Activated CD8-positive, alpha-beta T cell treated with anti-CD3 and anti-CD28 coated beads, Interleukin-2, amount 10 ng/mL, durations not matched to agents 7 days and 5 days (primary cell): ENCODE measurements at regions of chr16 and their contacts with region 1.

Region 1: DNA sequence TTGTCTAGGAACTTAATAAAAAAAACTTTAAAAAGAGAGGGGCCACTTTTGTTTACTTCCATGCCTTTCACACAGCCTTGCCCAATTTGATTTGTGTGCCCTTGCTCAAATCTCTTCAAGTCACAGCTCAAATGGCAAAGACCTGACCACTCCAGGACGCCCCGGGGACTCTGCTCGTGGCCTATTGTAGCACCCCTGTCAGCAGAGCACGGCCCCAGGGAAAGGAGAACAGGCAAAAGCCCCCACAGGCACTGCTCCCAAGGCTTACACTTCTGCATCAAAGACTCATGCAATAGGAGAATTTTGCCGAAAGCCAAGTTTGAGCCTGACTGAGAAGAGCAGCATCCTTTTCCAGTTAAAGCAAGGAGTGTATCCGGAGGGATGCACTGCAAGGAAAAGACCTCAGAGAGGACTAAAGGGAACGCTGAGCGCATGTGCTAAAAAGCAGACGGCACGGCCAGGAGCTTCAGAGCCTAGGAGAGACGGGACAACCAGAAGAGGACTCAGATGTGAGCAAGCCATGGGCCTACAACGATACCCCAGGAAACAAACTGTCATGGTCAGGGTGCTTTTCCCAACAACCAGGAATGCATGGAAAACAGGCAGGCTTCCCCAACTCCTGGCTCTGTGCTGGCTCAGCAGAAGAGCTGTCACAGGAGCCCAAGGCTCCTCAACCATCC is 8.2 kb downstream of the CREBBP start:
- DNase-seq: no peak
- ATAC-seq: no peak
- H3K4me3 Mint-ChIP-seq: no peak overlapping the region
- H3K27ac Mint-ChIP-seq: no peak overlapping the region
- H3K4me1 Mint-ChIP-seq: peaks cover 63% of the 10 kb centered on the region
- H3K27me3 Mint-ChIP-seq: no peaks in the 10 kb centered on the region

Region 2: DNA sequence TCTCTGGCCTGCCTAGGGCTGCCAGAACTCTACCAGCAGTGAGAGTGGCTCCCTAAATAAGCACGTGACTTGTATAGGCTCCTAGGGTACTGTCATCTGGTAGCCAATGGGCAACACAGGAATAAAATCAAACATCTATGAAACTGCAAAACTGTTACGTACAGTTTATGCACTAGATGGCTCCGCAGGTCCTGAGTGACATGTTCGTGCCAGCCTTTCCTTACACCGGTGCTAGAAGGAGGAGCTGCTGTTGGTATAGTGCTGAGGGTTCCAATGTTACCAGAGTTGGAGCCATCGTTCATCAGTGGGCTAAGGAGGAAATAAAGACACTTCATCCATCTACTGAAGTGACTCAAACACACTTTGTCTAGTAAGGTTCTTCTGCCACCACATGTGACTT is 91.8 kb before region 1 on chr16:
- CTCF ChIA-PET with region 1: interaction called, 18 read pairs
- POLR2A ChIA-PET with region 1: interaction called, 3 read pairs
- DNase-seq: peak; percentile 49
- ATAC-seq: peak; percentile 75
- H3K4me3 Mint-ChIP-seq: no peak overlapping the region
- H3K27ac Mint-ChIP-seq: no peak overlapping the region
- H3K4me1 Mint-ChIP-seq: peaks cover 4% of the 10 kb centered on the region
- H3K27me3 Mint-ChIP-seq: no peaks in the 10 kb centered on the region

Region 3: GRCh38 chr16:3890091-3890490 is 17.7 kb after region 1 on chr16:
- CTCF ChIA-PET with region 1: no interaction called
- POLR2A ChIA-PET with region 1: no interaction called
- DNase-seq: no peak
- ATAC-seq: no peak
- H3K4me3 Mint-ChIP-seq: no peak overlapping the region
- H3K27ac Mint-ChIP-seq: no peak overlapping the region
- H3K4me1 Mint-ChIP-seq: no peaks in the 10 kb centered on the region
- H3K27me3 Mint-ChIP-seq: peaks cover 14% of the 10 kb centered on the region

Region 4: DNA sequence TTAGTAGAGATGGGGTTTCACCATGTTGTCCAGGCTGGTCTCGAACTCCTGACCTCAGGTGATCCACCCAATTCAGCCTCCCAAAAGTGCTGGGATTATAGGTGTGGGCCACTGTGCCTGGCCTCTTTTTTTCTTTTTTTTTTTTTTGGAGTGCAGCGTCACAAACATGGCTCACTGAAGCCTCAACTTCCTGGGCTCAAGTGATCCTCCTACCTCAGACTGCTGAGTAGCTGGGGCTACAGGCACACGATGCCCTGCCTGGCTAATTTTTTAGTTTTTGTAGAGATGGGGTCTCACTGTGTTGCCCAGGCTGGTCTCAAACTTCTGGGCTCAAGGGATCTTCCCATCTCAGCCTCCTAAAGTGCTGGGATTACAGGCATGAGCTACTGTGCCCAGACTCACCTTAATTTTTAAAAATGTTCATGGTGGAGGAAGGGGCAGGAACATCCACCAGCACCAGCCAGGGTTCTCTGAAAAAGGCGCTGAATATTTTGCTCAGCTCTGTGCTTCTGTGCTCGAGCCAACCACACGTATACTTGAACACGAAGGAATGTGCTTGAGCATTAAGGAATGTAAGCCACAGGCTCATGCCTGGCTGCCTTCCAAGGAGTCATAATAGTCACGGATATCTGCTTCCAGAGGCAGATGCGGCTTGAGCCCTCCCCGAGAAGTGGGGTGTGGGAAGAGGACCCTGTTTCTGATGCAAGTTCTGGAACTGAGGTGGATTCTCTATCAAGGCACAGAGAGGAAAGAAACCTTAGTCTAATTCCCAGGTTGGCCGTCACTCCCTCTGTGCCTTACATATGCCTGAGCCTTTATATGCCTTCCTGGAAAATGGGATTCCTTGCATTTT is 73.6 kb after region 1 on chr16:
- CTCF ChIA-PET with region 1: no interaction called
- POLR2A ChIA-PET with region 1: no interaction called
- DNase-seq: no peak
- ATAC-seq: no peak
- H3K4me3 Mint-ChIP-seq: no peak overlapping the region
- H3K27ac Mint-ChIP-seq: no peak overlapping the region
- H3K4me1 Mint-ChIP-seq: peaks cover 4% of the 10 kb centered on the region
- H3K27me3 Mint-ChIP-seq: peaks cover 3% of the 10 kb centered on the region